K562 (cell line): ENCODE measurements at regions of chr6 and their contacts with region 1.

Region 1: DNA sequence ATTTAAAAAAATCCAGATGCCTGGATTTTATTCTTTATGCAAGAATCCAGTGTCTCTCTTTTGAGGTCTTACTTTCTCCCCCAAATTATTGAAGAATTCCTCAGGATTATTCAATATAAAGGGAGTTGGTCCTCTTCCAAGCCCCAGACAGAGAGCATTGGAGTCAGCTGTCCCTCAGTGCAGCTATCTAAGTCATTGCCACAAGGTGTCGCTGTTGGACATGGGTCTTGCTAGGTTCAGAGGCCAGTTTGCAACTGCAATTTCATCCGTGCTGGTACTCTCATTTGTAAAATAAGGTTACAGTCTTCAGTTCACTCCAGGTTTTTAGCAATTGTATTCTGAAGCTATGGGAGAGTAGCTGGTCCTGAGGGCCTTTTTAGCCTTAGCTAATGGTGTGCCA is 27.8 kb downstream of the CCN2 start:
- DNase-seq: peak; percentile 45 to 78 (median 62)
- ATAC-seq: peak; percentile 97
- H3K4me3 ChIP-seq: no peak overlapping the region
- H3K27ac ChIP-seq: no peak overlapping the region
- H3K4me1 ChIP-seq: no peaks in the 10 kb centered on the region
- H3K27me3 ChIP-seq: no peaks in the 10 kb centered on the region
- CTCF ChIP-seq: peak; percentile 76 to 80 (median 77)
- EP300 ChIP-seq: no peak
- POLR2A ChIP-seq: no peak
- RAD21 ChIP-seq: peak; percentile 36 to 63

Region 2: DNA sequence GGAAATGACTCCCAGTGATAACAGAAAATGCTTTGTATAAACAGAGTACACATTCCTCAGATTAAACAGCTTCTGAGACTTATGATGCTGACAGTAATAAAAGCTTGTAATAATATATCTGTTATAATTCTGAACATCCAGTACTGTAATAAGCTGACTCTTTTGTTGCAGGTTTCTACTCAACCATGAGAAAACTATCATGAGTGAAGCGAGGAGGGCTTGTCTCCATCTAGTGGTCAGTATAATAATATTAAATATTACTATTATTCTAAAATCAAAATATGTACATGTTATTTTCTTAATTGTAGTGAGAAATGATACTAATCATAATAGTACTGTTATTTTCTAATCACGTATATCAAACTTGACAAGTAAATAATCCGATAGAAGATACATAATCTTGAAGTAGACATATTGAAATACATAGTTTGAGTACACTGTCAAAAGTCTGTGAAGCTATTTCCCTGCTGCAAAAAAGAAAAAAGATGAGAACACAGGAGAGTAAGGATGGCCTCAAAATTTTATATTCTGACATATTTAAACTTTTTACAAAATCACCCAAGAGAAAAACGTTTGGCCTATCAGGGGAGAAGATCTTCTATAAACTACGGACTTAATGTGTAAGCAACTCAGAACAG is 294.8 kb after region 1 on chr6:
- CTCF ChIA-PET with region 1: interaction called, 3 read pairs
- POLR2A ChIA-PET with region 1: no interaction called
- in situ Hi-C with region 1: no loop called
- intact Hi-C with region 1: loop called (anchors 2 kb)
- DNase-seq: peak in 1 of 4 experiments; percentile 1
- ATAC-seq: no peak
- H3K4me3 ChIP-seq: no peak overlapping the region
- H3K27ac ChIP-seq: no peak overlapping the region
- H3K4me1 ChIP-seq: no peaks in the 10 kb centered on the region
- H3K27me3 ChIP-seq: no peaks in the 10 kb centered on the region
- CTCF ChIP-seq: peak in 1 of 3 experiments; percentile 10; a peak in 1 of 6 replicates
- EP300 ChIP-seq: no peak
- POLR2A ChIP-seq: no peak
- RAD21 ChIP-seq: no peak

Region 3: DNA sequence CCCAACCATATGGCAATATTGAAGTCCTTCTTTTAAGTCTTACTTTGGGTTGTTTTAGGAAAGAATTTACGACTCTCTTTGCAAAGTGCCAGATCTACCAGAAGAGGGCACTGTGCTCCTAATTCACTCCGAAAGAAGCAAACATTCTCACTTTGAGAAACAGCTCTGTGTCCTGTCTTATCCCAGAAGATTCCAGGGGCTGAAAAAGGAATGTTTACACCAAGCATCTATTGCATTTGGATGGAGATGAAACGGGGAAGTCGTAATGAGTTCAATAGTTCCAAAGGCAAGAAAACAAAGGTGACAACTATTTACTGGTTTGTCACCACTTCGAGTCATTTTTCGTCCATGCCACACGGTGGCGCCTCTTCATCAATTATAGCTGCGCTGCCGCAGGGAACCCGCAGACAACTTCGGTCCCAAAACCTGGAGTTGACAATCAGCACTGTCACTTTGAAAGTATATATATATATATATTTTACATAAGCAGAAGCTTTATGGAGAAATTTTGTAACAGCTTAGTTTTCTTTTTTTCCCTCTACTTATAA is 356.3 kb after region 1 on chr6:
- CTCF ChIA-PET with region 1: interaction called, 4 read pairs
- POLR2A ChIA-PET with region 1: no interaction called
- in situ Hi-C with region 1: no loop called
- intact Hi-C with region 1: loop called (anchors 5 kb)
- DNase-seq: peak; percentile 55 to 83 (median 65)
- ATAC-seq: peak; percentile 94
- H3K4me3 ChIP-seq: peak overlapping the region; percentile 34
- H3K27ac ChIP-seq: no peak overlapping the region; the same call in 2 of the 3 replicates
- H3K4me1 ChIP-seq: no peaks in the 10 kb centered on the region
- H3K27me3 ChIP-seq: no peaks in the 10 kb centered on the region
- CTCF ChIP-seq: peak; percentile 69 to 96 (median 91)
- EP300 ChIP-seq: no peak
- POLR2A ChIP-seq: no peak
- RAD21 ChIP-seq: peak; percentile 80 to 82

Region 4: DNA sequence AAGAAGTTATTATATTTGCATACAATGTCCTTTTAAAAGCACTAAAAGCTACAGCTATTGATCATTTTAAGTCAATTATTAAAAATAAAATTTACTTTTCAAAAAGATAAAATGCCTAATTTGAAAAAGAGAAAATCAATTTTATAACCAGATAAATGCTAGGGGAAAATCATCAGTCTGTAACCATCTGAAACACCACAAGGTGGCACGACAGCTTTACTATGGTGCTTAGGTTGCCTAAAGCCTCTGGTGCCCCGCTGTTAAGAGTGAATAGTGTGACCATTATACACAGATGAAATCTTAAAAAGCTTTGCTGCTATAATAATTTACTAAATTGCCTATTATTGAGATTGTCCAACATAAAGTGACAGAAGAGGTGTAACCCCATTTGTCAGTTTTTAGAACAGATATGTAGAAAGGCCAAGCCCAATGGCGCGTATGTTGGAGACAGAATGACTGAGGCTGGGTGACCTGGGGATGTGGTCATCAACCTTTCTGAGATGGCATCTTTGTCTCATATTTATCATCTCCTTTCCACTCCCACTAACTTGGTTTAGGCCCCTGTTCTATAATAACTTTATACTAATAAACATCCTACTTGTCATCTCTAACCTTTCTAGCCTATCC is 377.1 kb after region 1 on chr6:
- CTCF ChIA-PET with region 1: interaction called, 9 read pairs
- POLR2A ChIA-PET with region 1: no interaction called
- in situ Hi-C with region 1: no loop called
- intact Hi-C with region 1: loop called (anchors 2 kb)
- DNase-seq: peak in 3 of 4 experiments; percentile 23 to 44 (median 24)
- ATAC-seq: peak; percentile 91
- H3K4me3 ChIP-seq: no peak overlapping the region
- H3K27ac ChIP-seq: no peak overlapping the region
- H3K4me1 ChIP-seq: no peaks in the 10 kb centered on the region
- H3K27me3 ChIP-seq: no peaks in the 10 kb centered on the region
- CTCF ChIP-seq: peak; percentile 45 to 62 (median 50); a peak in 5 of 6 replicates
- EP300 ChIP-seq: no peak
- POLR2A ChIP-seq: no peak
- RAD21 ChIP-seq: peak; percentile 68 to 70

Region 5: GRCh38 chr6:132483779-132484679 is 560.7 kb after region 1 on chr6:
- CTCF ChIA-PET with region 1: no interaction called
- POLR2A ChIA-PET with region 1: no interaction called
- in situ Hi-C with region 1: loop called (anchors 5 kb)
- intact Hi-C with region 1: loop called (anchors 10 kb)
- DNase-seq: peak; percentile 56 to 74 (median 64)
- ATAC-seq: peak; percentile 92
- H3K4me3 ChIP-seq: no peak overlapping the region
- H3K27ac ChIP-seq: no peak overlapping the region
- H3K4me1 ChIP-seq: peaks cover 0 to 4% of the 10 kb centered on the region in 2 experiments; a peak in 2 of 5 replicates
- H3K27me3 ChIP-seq: no peaks in the 10 kb centered on the region
- CTCF ChIP-seq: peak; percentile 60 to 82 (median 67); a peak in 5 of 6 replicates
- EP300 ChIP-seq: no peak
- POLR2A ChIP-seq: no peak
- RAD21 ChIP-seq: peak; percentile 66 to 70

Region 6: GRCh38 chr6:133553652-133554051 is 1630.3 kb after region 1 on chr6:
- CTCF ChIA-PET with region 1: no interaction called
- POLR2A ChIA-PET with region 1: no interaction called
- in situ Hi-C with region 1: loop called (anchors 25 kb)
- intact Hi-C with region 1: loop called (anchors 10 kb)
- DNase-seq: peak; percentile 15 to 59 (median 26)
- ATAC-seq: peak; percentile 92
- H3K4me3 ChIP-seq: no peak overlapping the region
- H3K27ac ChIP-seq: no peak overlapping the region
- H3K4me1 ChIP-seq: no peaks in the 10 kb centered on the region
- H3K27me3 ChIP-seq: no peaks in the 10 kb centered on the region
- CTCF ChIP-seq: peak; percentile 51 to 72 (median 53); a peak in 4 of 6 replicates
- EP300 ChIP-seq: no peak
- POLR2A ChIP-seq: no peak
- RAD21 ChIP-seq: peak; percentile 74 to 76